Activated CD4-positive, alpha-beta memory T cell treated with anti-CD3 and anti-CD28 coated beads for 36 hours (primary cell): ENCODE measurements at regions of chr3 and their contacts with region 1.

Region 1: GRCh38 chr3:185308126-185308754 is 54.4 kb upstream of the EHHADH start:
- DNase-seq: peak; percentile 52
- H3K4me3 Mint-ChIP-seq: no peak overlapping the region
- H3K27ac Mint-ChIP-seq: no peak overlapping the region
- H3K4me1 Mint-ChIP-seq: peaks cover 3% of the 10 kb centered on the region
- H3K27me3 Mint-ChIP-seq: no peaks in the 10 kb centered on the region

Region 2: DNA sequence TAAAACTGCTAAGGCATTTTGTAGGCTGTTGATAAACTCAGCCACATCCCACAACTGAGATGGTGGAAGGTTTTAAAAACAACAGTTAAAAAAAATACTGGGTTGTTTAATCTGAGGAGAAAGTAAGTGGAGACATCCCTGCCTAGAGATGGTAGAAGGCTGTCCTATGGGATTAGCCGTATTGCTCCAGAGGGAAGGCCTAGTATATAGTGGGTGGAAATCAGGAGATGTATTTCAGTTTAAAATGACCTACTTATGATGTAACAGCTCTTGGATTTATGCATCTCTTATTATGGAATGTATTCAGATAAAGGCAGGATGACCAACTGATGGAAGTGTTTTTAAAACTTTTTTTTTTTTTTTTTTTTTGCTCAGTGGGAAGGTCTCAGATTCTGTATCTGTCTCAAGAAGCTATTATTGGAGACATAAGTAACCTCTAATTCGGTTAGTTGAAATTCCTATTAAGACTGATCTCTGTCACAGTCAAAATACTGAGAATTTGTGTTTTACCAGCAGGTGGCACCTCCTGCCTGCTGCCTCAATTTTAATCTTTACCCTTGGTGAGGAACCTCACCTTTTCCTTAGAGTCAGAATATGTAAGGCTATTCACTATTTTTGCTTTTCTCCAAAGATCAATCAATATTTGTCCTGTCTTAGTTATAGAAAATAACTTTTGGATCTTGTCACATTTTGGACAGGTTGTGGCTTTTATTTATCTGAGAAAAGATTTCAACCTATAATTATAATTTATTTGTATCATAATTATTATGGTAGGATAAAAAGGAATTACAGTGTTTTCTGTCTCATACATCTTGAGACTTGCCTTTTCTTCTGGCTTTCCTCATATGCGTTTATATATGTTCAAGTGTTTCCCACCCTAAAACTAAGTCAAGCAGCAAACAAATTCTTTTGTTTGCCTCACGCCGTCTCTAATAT is 433.3 kb before region 1 on chr3:
- CTCF ChIA-PET with region 1: interaction called, 4 read pairs
- POLR2A ChIA-PET with region 1: no interaction called
- intact Hi-C with region 1: loop called (anchors 1 kb)
- DNase-seq: peak; percentile 17
- H3K4me3 Mint-ChIP-seq: no peak overlapping the region
- H3K27ac Mint-ChIP-seq: no peak overlapping the region
- H3K4me1 Mint-ChIP-seq: peaks cover 14% of the 10 kb centered on the region
- H3K27me3 Mint-ChIP-seq: no peaks in the 10 kb centered on the region

Region 3: DNA sequence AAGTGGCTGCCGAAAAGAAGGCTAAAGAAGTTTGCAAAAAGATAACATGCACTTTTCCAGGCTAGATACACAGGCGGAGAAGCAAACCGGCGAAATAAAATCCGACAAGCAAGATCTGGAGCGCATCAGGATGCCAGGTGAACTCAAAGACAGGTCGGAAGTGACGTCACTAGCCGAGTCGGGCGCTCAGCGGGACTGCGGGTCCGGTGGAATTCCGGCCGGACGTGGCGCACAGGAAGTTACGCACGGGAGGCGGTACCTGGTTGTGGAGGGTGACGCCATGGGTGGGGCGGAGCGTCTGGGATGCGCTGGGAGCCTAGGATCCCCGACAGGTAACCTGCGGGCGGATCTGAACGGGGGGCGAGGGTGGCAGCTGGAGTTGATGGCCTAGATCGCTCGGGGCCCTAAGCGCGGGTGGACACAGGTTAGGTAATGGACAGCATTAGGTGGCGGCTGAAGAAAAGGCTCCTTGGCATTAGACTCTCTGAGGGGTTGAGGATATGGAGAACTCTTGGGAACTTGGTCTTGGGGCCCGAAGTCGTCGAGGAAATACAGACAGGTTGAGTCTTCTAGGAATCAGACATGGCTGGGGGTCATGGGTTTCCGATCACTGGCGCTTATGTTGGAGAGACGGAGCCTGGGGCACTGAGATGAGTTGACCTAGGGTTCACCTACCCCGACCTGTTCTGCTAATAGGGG is 25.4 kb before region 1 on chr3:
- CTCF ChIA-PET with region 1: interaction called, 13 read pairs
- POLR2A ChIA-PET with region 1: no interaction called
- intact Hi-C with region 1: no loop called
- DNase-seq: peak; percentile 96
- H3K4me3 Mint-ChIP-seq: peak overlapping the region; percentile 99
- H3K27ac Mint-ChIP-seq: peak overlapping the region; percentile 86
- H3K4me1 Mint-ChIP-seq: peaks cover 23% of the 10 kb centered on the region
- H3K27me3 Mint-ChIP-seq: peaks cover 10% of the 10 kb centered on the region

Region 4: DNA sequence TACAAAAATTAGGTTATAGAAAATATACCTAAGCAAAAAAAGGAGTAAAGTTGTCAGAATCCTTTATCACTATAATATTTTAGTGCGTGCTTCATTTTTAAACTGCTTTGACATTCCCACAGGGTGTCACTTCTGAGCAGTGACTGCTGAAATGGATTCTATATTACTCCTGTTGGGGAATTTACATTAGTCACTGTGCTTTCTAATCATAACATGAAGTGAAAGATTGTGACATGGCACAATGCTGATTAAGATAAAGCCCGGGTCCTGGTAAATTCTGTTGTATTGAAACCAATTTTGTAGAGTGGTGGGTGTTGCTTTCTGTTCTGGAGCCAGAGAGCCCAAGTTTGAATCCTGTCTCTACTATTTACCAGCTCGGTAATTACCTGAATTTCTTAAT is 18.0 kb before region 1 on chr3:
- CTCF ChIA-PET with region 1: interaction called, 20 read pairs
- POLR2A ChIA-PET with region 1: interaction called, 3 read pairs
- intact Hi-C with region 1: loop called (anchors 2 kb)
- DNase-seq: peak; percentile 16
- H3K4me3 Mint-ChIP-seq: no peak overlapping the region
- H3K27ac Mint-ChIP-seq: no peak overlapping the region
- H3K4me1 Mint-ChIP-seq: peaks cover 11% of the 10 kb centered on the region
- H3K27me3 Mint-ChIP-seq: no peaks in the 10 kb centered on the region